ENCODE measurements at regions of chr13 and their contacts with region 1.

Region 1: GRCh38 chr13:22757530-22758120 is 423.2 kb upstream of the SGCG start:
- DNase-seq: no peak
- ATAC-seq: no peak
- H3K4me3 ChIP-seq: no peak overlapping the region
- H3K27ac ChIP-seq: no peak overlapping the region
- H3K4me1 ChIP-seq: no peaks in the 10 kb centered on the region
- H3K27me3 ChIP-seq: no peaks in the 10 kb centered on the region
- CTCF ChIP-seq: peak in 11 of 12 donors; percentile 9 to 60 (median 43)
- POLR2A ChIP-seq: no peak

Region 2: GRCh38 chr13:21638319-21639282 is 1119.0 kb before region 1 on chr13:
- intact Hi-C with region 1: loop called (anchors 5 to 10 kb)
- DNase-seq: no peak
- ATAC-seq: no peak
- H3K4me3 ChIP-seq: no peak overlapping the region
- H3K27ac ChIP-seq: no peak overlapping the region
- H3K4me1 ChIP-seq: no peaks in the 10 kb centered on the region
- H3K27me3 ChIP-seq: peaks cover 0 to 14% (median 0%) of the 10 kb centered on the region in 9 donors
- CTCF ChIP-seq: peak; percentile 72 to 88 (median 78)
- POLR2A ChIP-seq: no peak

Region 3: GRCh38 chr13:21849323-21849722 is 908.3 kb before region 1 on chr13:
- intact Hi-C with region 1: loop called in 1 of 10 experiments (anchors 10 kb)
- DNase-seq: no peak
- ATAC-seq: peak in 3 of 4 donors; percentile 70 to 78 (median 78)
- H3K4me3 ChIP-seq: no peak overlapping the region
- H3K27ac ChIP-seq: no peak overlapping the region
- H3K4me1 ChIP-seq: peaks cover 0 to 16% (median 0%) of the 10 kb centered on the region in 12 donors
- H3K27me3 ChIP-seq: no peaks in the 10 kb centered on the region
- CTCF ChIP-seq: peak; percentile 39 to 61 (median 50)
- POLR2A ChIP-seq: no peak

Region 4: DNA sequence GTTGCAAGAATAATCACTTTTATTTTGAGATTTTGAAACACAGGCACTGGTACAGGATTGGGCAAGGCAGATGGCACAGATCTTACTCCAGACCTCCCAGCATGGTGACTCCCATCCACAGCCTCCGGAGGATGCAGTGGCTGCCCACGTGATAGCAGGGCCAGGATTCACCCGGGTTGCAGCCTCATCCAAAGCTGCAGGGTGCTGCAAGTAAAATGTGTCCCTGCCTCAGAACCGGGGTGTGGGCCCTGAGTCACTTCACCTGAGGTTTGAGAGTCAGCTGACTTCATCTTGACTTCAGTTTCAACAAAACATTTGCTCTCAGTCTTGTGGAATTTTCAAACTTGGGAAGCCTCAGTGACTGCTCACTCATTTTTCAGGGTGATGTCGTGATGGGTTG is 884.8 kb before region 1 on chr13:
- intact Hi-C with region 1: loop called in 1 of 10 experiments (anchors 10 kb)
- DNase-seq: no peak
- ATAC-seq: no peak
- H3K4me3 ChIP-seq: no peak overlapping the region
- H3K27ac ChIP-seq: no peak overlapping the region
- H3K4me1 ChIP-seq: no peaks in the 10 kb centered on the region
- H3K27me3 ChIP-seq: peaks cover 0 to 3% (median 0%) of the 10 kb centered on the region in 9 donors
- CTCF ChIP-seq: no peak
- POLR2A ChIP-seq: no peak

Region 5: GRCh38 chr13:22161871-22162270 is 595.8 kb before region 1 on chr13:
- intact Hi-C with region 1: loop called in 1 of 10 experiments (anchors 10 kb)
- DNase-seq: no peak
- ATAC-seq: no peak
- H3K4me3 ChIP-seq: no peak overlapping the region
- H3K27ac ChIP-seq: peak overlapping the region in 1 of 12 donors; percentile 19
- H3K4me1 ChIP-seq: peaks cover 0 to 21% (median 0%) of the 10 kb centered on the region in 12 donors
- H3K27me3 ChIP-seq: no peaks in the 10 kb centered on the region
- CTCF ChIP-seq: no peak
- POLR2A ChIP-seq: no peak

Measured in heart left ventricle (tissue), 16 donors.